Activated CD8-positive, alpha-beta T cell treated with anti-CD3 and anti-CD28 coated beads for 36 hours (primary cell): ENCODE measurements at regions of chr13 and their contacts with region 1.

Region 1: DNA sequence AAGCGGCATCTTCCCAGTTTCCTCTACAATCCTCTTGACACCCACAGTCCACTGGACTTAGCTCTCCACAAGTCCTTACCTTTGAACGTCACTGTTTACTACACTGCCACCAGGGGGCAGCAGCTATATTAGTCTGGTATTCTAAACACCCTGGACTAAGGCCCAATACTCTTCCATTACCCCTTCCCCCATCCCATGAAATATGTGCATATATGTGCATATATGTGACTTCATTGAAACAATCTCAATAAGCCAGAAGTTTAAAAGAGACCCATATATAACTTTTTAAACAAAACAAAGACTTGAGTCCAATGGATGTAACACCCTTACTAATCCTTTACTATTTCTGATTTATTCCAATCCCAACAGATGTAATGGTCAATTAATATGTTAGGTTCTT is 15.5 kb downstream of the GGACT start:
- DNase-seq: peak; percentile 88
- ATAC-seq: peak; percentile 95
- H3K4me3 Mint-ChIP-seq: no peak overlapping the region
- H3K27ac Mint-ChIP-seq: no peak overlapping the region
- H3K4me1 Mint-ChIP-seq: peaks cover 15% of the 10 kb centered on the region
- H3K27me3 Mint-ChIP-seq: no peaks in the 10 kb centered on the region
- CTCF ChIP-seq: peak; percentile 80

Region 2: DNA sequence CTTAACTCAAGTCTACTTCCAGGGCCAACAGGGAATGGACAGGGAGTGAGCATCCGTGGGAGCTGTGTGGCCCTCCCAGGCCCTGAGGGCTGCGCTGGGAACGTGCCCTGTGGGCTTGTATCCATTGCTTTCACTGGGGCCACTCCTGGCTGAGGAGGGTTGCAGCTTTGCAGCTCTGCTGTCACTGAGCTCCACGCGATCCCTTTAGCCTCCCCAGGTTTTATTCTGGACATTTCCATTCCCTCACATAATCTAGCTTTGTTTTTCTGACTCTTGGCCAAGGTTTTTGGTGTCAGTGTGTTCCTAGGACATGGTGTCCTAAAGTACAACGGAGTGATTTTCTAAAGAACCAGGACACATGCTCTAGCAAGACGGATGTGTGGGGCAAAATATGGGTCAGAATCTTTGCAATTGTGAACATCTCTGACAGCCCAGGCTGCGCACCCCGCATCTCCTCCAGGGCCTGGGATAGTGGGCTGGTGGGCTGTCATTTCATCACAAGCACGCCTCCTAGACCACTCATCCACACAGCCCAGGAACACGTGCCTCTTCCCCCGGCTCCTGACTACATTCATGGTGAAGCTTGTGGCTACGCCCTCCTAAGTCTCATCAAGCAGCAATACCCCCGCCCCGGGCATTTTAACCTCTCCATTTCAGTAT is 12.5 kb before region 1 on chr13:
- CTCF ChIA-PET with region 1: interaction called, 28 read pairs
- POLR2A ChIA-PET with region 1: no interaction called
- intact Hi-C with region 1: no loop called
- DNase-seq: no peak
- ATAC-seq: no peak
- H3K4me3 Mint-ChIP-seq: no peak overlapping the region
- H3K27ac Mint-ChIP-seq: no peak overlapping the region
- H3K4me1 Mint-ChIP-seq: peaks cover 2% of the 10 kb centered on the region
- H3K27me3 Mint-ChIP-seq: no peaks in the 10 kb centered on the region
- CTCF ChIP-seq: no peak

Region 3: DNA sequence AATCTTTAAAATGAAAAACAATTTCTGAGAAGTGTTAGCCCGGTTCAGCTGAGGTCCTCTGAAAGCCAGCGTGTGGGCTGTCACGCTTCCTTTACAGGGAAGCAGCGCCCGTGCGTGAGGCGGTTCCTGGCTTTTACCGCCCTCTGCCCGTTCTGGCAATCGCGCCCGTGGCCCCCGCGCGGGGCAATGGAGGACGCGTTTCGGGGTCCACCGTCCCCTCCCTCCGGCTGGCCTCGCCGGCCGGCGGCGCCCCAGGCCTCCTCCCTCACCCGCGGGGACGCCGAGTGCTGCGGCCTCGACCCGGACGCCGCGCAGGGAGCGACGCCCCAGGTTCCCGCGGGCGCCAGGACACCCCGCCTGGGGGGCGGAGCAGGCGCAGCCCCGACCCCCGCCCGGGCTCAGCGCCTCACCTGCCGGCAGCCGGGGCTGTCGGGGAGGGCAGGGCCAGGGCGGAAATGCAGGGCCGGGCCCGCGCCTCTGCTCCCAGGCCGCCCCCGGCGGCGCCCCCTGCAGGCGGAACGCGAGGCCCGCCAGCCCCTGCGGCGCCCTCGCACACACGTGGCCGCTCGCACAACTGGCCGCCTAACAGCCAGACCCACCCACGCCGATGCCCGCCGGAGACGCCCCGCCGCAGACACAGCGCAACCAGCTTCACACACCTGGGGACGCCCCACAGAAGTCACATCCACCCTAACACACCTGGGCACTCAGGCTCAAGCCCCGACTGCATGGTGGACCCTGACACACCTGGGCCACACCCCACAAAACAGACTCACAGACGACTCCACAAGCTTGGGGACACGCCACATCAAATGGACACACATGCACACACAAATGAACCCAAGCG is 15.4 kb after region 1 on chr13 and contains the start of gene GGACT:
- CTCF ChIA-PET with region 1: interaction called, 97 read pairs
- POLR2A ChIA-PET with region 1: interaction called, 3 read pairs
- intact Hi-C with region 1: no loop called
- DNase-seq: peak; percentile 85
- ATAC-seq: peak; percentile 93
- H3K4me3 Mint-ChIP-seq: peak within 1 kb of the TSS; percentile 77
- H3K27ac Mint-ChIP-seq: peak within 1 kb of the TSS; percentile 88
- H3K4me1 Mint-ChIP-seq: peaks cover 37% of the 10 kb centered on the region
- H3K27me3 Mint-ChIP-seq: no peaks in the 10 kb centered on the region
- CTCF ChIP-seq: peak; percentile 83
- total RNA-seq, gene GGACT: 4.0 to 5.3 TPM

Region 4: DNA sequence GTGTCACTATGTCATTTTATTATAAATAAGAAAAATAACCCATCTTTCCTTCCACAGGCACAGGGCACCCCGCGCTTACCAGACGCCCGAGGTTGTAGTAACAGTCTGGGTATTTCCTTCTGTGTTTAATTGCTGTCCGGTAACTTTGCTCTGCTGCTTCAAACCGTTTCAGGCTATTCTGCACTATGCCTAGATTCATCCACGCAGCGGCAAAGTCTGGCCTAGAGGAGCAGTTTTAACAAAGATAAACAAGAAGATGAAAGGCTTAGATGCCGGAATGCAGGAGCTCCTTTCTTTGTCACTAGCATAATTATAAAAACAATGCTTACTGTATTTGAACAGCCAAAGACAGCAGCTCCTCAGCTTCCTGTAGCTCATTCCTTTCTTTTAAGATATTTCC is 52.3 kb after region 1 on chr13:
- CTCF ChIA-PET with region 1: interaction called, 12 read pairs
- POLR2A ChIA-PET with region 1: no interaction called
- intact Hi-C with region 1: no loop called
- DNase-seq: no peak
- ATAC-seq: no peak
- H3K4me3 Mint-ChIP-seq: no peak overlapping the region
- H3K27ac Mint-ChIP-seq: no peak overlapping the region
- H3K4me1 Mint-ChIP-seq: peaks cover under 1% of the 10 kb centered on the region
- H3K27me3 Mint-ChIP-seq: no peaks in the 10 kb centered on the region
- CTCF ChIP-seq: no peak

Region 5: GRCh38 chr13:100633461-100633860 is 60.3 kb after region 1 on chr13:
- CTCF ChIA-PET with region 1: interaction called, 13 read pairs
- POLR2A ChIA-PET with region 1: no interaction called
- intact Hi-C with region 1: no loop called
- DNase-seq: no peak
- ATAC-seq: no peak
- H3K4me3 Mint-ChIP-seq: no peak overlapping the region
- H3K27ac Mint-ChIP-seq: no peak overlapping the region
- H3K4me1 Mint-ChIP-seq: no peaks in the 10 kb centered on the region
- H3K27me3 Mint-ChIP-seq: no peaks in the 10 kb centered on the region
- CTCF ChIP-seq: no peak

Region 6: GRCh38 chr13:101127741-101128353 is 554.7 kb after region 1 on chr13:
- CTCF ChIA-PET with region 1: interaction called, 25 read pairs
- POLR2A ChIA-PET with region 1: no interaction called
- intact Hi-C with region 1: loop called (anchors 5 kb)
- DNase-seq: peak; percentile 34
- ATAC-seq: peak; percentile 75
- H3K4me3 Mint-ChIP-seq: no peak overlapping the region
- H3K27ac Mint-ChIP-seq: no peak overlapping the region
- H3K4me1 Mint-ChIP-seq: no peaks in the 10 kb centered on the region
- H3K27me3 Mint-ChIP-seq: peaks cover 2% of the 10 kb centered on the region
- CTCF ChIP-seq: peak; percentile 80